ENCODE measurements at regions of chrX and their contacts with region 1.

Region 1: GRCh38 chrX:103845165-103845653 is 13.2 kb upstream of the RAB9B start:
- DNase-seq: no peak
- H3K4me3 Mint-ChIP-seq: no peak overlapping the region
- H3K27ac Mint-ChIP-seq: no peak overlapping the region
- H3K4me1 Mint-ChIP-seq: peaks cover 3% of the 10 kb centered on the region
- H3K27me3 Mint-ChIP-seq: peaks cover 2% of the 10 kb centered on the region

Region 2: GRCh38 chrX:103624111-103624510 is 221.1 kb before region 1 on chrX:
- intact Hi-C with region 1: no loop called
- DNase-seq: no peak
- H3K4me3 Mint-ChIP-seq: no peak overlapping the region
- H3K27ac Mint-ChIP-seq: no peak overlapping the region
- H3K4me1 Mint-ChIP-seq: peaks cover 13% of the 10 kb centered on the region
- H3K27me3 Mint-ChIP-seq: no peaks in the 10 kb centered on the region

Region 3: DNA sequence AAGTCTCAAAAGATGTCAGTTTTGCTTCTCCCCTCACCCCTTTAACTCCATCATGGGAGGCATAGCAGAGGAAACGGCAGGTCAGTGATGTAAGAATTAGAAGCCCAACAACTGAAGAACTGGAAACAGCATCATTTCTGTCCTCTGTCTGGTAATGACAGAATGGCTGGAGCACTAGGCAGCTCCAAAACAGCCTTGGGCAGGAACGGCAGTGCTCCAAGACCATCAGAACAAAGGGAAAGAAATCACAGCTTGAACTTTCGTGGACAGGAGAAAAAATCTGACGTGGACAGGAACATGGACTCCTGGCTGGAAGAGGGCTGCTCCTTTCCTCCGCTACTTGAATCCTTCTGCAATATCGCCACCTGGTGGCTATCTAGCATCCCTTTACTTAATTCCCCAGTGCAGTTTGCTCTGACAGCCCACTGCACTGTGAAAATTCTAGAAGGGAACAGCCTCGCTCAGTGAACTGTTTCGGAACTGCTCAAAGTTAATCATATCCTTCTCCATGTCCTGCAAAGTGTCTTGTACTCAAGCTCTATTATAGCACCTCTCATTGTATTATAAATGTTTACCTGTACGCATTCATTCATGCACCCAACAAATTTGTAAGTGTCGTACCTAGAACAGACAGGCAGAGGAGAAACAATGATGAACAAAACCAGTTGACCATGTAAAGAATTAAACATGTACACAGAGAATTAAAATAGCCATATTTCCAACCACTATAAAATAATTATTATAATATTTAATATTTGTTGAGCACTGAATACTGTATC is 291.2 kb after region 1 on chrX:
- intact Hi-C with region 1: loop called (anchors 1 kb)
- DNase-seq: peak; percentile 14
- H3K4me3 Mint-ChIP-seq: no peak overlapping the region
- H3K27ac Mint-ChIP-seq: no peak overlapping the region
- H3K4me1 Mint-ChIP-seq: peaks cover 15% of the 10 kb centered on the region
- H3K27me3 Mint-ChIP-seq: no peaks in the 10 kb centered on the region